ENCODE measurements at regions of chr10 and their contacts with region 1.

Region 1: DNA sequence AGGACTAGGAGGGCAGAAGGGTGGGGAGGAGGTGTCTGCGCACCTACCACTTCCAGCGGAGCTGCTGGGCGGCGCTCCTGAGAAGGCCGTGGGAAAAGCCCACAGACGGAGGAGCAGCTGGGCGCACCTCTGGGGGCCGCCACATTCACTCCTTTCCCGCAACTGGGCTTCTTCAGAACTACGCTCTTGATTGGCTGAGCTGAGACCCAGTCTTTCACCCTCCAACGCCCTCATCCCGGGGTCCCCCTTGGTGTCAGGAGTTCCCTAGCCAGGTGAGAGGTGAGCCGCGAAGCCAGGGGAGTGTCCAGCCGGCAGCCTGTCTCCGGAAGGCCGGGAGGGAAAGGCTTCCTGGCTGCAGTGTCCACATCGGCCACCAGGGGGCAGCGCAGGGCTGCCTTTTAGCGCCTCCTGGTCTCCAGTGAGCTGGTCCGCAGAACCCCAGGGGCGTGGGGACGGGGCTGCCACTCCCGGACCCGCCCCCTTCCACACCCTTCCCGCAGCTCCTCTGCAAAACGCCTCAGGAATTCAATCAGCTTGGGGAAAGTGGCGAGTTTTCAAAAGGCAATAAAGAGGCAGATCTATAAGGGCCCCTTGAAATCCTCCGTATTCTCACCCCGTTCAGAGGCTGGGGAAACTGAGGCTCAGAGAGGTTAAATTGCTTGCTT is 98.8 kb downstream of the CHST15 start:
- DNase-seq: peak; percentile 83
- H3K4me3 Mint-ChIP-seq: no peak overlapping the region
- H3K27ac Mint-ChIP-seq: no peak overlapping the region
- H3K4me1 Mint-ChIP-seq: peaks cover 11% of the 10 kb centered on the region
- H3K27me3 Mint-ChIP-seq: peaks cover 52% of the 10 kb centered on the region

Region 2: DNA sequence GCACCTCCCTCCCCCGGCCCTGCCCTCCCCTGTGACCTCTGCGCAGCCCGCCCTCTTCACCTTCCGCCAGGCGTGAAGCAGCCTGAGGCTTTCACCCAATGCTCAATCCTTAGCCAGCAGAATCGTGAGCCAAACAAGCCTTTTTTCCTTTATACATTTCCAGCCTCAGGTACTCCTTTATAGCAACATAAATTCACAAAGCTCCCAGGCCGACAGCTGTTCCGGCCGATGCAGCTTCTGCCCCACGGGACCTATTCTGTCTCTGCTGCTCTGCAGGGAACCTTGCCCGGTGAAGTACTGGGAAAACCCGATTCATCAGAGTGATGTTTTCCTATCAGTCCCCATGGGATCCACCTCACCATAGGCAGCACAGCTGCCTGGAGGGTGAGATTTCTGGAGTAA is 11.4 kb after region 1 on chr10:
- CTCF ChIA-PET with region 1: interaction called, 10 read pairs
- intact Hi-C with region 1: no loop called
- DNase-seq: no peak
- H3K4me3 Mint-ChIP-seq: no peak overlapping the region
- H3K27ac Mint-ChIP-seq: no peak overlapping the region
- H3K4me1 Mint-ChIP-seq: no peaks in the 10 kb centered on the region
- H3K27me3 Mint-ChIP-seq: no peaks in the 10 kb centered on the region

Region 3: GRCh38 chr10:124152916-124153826 is 158.6 kb after region 1 on chr10:
- CTCF ChIA-PET with region 1: interaction called, 4 read pairs
- intact Hi-C with region 1: loop called (anchors 5 kb)
- DNase-seq: peak; percentile 90
- H3K4me3 Mint-ChIP-seq: no peak overlapping the region
- H3K27ac Mint-ChIP-seq: no peak overlapping the region
- H3K4me1 Mint-ChIP-seq: peaks cover 7% of the 10 kb centered on the region
- H3K27me3 Mint-ChIP-seq: peaks cover 16% of the 10 kb centered on the region

Region 4: DNA sequence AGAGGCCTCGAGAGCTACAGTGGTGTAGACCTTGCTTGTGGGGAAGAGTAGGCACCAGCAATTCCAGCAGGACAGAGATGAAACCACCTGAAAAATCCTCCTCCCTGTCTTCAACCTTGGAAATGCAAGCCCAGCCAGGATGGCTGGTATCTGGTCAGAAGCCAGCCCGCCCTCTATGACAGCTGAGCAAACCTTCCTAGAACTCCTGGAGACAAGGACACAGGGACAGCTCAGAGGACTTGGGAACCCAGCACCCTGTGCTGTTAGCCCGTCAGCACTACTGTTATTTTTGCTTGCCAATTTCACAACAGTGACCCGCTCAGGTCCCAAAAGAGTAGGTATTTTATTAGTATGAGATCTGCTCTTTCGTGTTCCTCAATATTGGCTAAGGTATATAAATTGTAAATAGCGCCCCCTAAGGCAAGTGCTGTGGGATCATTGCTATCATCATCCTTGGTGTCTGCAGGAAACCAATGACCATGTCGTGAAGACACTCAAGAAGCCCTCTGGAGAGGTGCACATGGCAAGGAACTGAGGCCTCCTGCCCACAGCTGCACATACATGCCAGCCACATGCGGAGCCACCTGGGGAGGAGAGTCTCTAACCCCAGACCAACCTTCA is 255.4 kb after region 1 on chr10:
- CTCF ChIA-PET with region 1: interaction called, 9 read pairs
- intact Hi-C with region 1: loop called (anchors 1 kb)
- DNase-seq: no peak
- H3K4me3 Mint-ChIP-seq: no peak overlapping the region
- H3K27ac Mint-ChIP-seq: no peak overlapping the region
- H3K4me1 Mint-ChIP-seq: no peaks in the 10 kb centered on the region
- H3K27me3 Mint-ChIP-seq: no peaks in the 10 kb centered on the region

Region 5: DNA sequence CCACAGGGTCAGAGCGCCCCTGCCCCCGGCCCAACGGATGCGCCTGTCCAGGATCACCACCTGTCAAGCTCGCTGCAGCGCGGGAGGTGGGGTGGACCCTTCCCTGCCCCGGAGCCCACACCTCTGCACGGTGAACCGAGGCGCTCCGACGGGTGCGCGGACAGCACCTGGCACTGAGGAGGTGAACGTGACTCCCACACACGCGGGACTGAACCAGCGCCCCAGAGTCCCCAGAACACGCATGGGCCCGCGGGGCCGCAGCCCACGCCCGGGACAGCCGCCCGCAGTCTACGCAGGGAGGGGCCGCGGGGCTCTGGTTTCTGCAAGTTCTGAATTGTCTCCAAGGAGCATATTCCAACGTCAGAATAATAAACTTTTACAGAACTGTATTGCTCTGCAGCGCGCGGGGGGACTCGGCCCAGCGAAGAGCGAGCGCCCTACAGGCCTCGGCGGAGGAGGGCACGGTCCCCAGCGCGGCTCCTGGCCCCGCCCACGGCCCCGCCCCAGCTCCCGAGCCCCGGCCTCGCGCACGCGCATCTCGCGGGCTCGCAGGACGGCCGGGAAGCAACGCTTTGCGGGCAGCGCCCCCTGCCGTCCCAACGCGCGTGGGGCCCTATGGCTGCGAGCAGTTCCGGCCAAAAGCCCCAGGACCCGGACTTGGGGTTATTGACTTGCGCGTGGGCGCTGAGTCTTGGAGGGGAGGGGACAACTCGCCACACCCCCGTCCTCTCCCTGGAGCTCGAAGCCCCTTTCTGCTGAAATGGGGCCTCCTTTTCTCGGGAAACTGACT is 394.5 kb after region 1 on chr10:
- CTCF ChIA-PET with region 1: interaction called, 123 read pairs
- intact Hi-C with region 1: loop called (anchors 1 kb)
- DNase-seq: peak; percentile 90
- H3K4me3 Mint-ChIP-seq: no peak overlapping the region
- H3K27ac Mint-ChIP-seq: no peak overlapping the region
- H3K4me1 Mint-ChIP-seq: no peaks in the 10 kb centered on the region
- H3K27me3 Mint-ChIP-seq: no peaks in the 10 kb centered on the region

Region 6: GRCh38 chr10:124403548-124403947 is 409.0 kb after region 1 on chr10:
- CTCF ChIA-PET with region 1: interaction called, 15 read pairs
- intact Hi-C with region 1: loop called (anchors 1 kb)
- DNase-seq: peak; percentile 33
- H3K4me3 Mint-ChIP-seq: no peak overlapping the region
- H3K27ac Mint-ChIP-seq: no peak overlapping the region
- H3K4me1 Mint-ChIP-seq: peaks cover 5% of the 10 kb centered on the region
- H3K27me3 Mint-ChIP-seq: no peaks in the 10 kb centered on the region